ENCODE measurements at regions of chr2 and their contacts with region 1.

Region 1: GRCh38 chr2:200306196-200306930 is at the start of gene SPATS2L:
- DNase-seq: peak; percentile 91
- total RNA-seq, gene SPATS2L: 144 TPM

Region 2: GRCh38 chr2:199911052-199911876 is 395.1 kb before region 1 on chr2 and contains the start of gene C2orf69:
- intact Hi-C with region 1: loop called (anchors 5 kb)
- DNase-seq: peak; percentile 97
- total RNA-seq, gene C2orf69: 8.7 TPM

Region 3: DNA sequence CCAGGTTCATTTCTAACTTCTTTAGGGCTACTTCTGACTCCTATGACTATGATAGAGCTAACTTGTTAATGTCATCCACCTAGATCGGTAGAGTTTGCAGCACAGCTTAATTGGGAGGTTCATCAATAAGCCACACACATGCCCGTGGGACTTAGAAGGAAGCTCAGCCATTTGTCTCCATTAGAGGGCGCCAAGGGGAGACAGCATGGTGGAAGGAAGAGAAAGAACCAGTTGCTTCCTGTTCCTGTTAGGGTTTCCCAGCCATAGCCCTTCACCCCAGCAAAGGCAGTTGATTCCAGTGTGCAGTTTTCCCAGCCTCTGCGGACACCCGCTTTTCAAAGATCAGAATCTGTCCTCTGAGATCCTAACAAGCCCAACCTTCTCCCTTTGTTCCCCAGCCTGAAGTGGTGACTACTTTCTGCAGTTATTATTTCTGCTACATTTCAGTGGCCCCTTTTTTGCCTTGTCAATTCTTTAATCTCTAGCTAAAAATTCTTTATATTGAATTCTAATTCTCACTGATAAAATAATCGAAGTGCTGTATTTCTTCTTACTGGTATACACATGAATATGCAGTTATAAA is 320.6 kb before region 1 on chr2:
- intact Hi-C with region 1: loop called (anchors 5 kb)
- DNase-seq: no peak

Region 4: DNA sequence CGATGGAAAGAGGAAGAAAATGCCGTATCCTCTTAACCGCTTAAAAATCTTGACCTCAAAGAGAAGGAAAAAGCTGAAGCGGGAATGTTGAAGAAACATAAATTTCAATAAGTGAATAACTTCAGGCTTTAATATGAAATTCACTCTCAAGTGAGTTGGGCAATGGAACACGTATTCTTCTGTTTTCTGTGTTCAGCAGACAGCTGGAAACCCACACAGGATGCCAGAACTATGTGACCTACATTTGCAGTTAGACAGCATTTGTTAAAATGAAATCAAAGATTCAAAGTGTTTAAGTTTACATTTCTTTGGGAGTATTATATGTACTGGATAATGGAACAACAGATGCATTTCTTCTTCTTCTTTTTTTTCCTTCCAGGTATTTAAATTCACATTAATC is 80.4 kb before region 1 on chr2:
- intact Hi-C with region 1: loop called (anchors 5 kb)
- DNase-seq: no peak

Region 5: GRCh38 chr2:200405599-200406298 is 99.4 kb after region 1 on chr2:
- intact Hi-C with region 1: loop called (anchors 2 kb)
- DNase-seq: no peak

Region 6: DNA sequence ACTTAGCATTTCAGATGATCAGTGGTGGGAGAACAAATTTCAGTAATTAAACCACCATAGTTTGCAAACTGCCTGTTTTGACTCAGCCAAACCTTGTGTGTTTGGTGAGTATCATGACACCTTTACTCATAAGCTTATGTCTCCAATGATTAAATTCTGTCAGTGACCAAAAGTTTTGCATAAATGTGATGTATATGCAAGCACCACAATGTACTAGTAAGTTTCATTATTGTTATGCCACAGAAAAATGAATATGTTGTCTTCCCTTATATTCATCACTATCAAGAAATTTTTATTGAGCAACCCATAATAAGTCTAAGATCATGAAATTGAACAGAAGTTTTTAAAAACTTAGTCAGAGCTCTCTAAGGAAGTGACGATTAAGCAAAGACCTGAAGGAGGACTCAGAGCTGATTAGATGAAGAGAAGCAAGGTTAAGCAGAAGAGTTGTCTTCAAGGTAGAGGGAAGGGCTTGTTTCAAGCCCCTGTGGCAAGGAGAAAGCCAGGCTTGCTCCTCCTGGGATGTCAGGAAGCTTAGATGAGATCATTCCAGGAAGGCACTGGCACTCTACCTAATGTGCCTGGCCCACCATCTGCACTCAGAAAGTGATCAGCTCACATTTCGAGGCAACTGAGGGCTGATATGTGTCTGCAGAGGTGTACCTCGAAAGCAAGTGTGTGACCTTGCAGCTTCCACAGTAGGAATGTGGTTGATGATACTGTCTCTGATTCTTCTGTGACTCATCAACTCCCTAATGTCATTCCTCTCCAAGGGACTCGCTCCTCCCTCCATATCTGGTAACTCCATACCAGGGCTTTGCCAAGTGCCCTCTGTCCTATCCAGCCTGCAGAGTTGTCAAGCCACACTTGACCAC is 148.8 kb after region 1 on chr2:
- intact Hi-C with region 1: loop called (anchors 5 kb)
- DNase-seq: no peak